AG04449 (cell line): ENCODE measurements at regions of chr10 and their contacts with region 1.

Region 1: DNA sequence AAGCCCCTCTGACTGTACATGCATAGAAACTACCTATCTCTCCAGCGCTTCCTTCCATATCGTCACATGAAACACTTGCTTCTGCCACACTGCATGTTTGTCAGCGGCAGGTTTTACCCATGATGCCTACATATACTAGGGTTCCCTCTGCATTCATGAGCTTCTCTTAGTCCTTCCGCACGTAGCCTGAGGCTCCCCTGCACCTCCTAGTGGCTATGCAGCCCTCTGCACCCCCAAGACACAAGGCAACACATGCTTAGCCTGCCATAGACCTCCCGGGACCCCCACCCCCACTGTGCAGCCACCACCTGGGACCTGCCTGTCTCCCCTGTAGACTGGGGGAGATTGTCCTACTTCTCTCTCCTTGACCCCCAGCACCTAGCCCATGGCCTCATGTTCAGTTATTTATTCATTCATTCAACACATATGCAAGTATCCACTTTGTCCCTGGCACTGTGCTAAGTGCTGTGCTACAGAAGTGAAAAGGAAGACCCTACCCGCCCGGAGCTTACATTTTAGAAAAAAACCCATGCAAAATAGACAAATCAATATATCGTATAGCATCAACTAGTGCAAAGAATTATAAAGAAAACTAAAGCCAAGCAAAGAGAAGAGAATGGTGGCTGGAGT is 23.5 kb downstream of the TMEM273 start:
- DNase-seq: no peak
- H3K4me3 ChIP-seq: no peak overlapping the region
- CTCF ChIP-seq: peak; percentile 76

Region 2: DNA sequence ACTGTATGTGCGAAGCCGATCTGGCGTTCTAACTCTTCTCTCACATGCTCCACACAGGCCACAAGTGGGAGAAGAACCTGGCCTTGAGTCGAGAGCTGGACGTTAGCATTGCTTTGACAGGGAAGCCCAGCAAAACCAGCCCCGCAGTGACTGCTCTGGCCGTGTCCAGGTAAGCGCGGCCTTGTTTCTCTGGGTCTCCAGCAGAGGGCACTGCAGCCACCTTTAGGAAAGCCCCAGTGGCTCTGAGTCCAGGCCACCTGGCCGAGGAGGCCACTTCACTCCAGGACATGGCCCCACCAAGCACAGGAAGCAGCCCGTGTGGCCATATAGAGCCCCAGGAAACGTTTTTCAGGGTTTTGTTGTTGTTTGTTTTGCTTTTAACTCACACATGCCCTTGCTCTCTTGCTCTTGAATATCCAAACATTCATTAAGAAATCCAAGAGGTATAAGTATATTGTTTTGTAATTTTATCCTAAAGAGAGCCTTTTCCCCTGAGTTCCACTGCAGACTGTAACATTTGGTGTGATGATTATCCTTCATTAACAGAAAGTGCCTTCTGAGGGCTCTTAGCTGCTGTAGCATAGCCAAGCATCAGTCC is 183.3 kb before region 1 on chr10:
- CTCF ChIA-PET with region 1: interaction called, 52 read pairs
- POLR2A ChIA-PET with region 1: no interaction called
- DNase-seq: no peak
- H3K4me3 ChIP-seq: no peak overlapping the region
- CTCF ChIP-seq: peak; percentile 90

Region 3: DNA sequence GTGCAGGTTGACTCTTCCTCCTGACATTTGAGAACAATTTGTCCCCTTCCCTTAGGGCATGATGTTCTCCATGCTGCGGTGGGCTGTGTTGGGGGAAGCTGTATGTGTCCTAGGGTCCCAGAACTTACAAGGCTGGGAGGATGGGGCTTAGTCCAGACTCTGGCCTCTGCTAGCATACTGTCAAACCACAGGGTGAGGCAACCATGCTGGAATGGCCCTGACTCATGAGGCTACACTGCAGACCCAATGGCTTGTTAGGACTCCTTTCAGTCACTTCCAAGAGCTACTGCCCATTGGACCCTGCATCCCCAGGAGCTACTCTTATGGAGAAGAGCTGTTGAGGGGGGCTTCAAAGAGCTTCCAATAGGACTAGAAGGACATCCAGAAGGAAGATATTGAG is 10.7 kb before region 1 on chr10:
- CTCF ChIA-PET with region 1: interaction called, 48 read pairs
- POLR2A ChIA-PET with region 1: no interaction called
- DNase-seq: no peak
- H3K4me3 ChIP-seq: no peak overlapping the region
- CTCF ChIP-seq: no peak

Region 4: GRCh38 chr10:49194212-49194920 is 29.7 kb after region 1 on chr10:
- CTCF ChIA-PET with region 1: no interaction called
- POLR2A ChIA-PET with region 1: no interaction called
- DNase-seq: no peak
- H3K4me3 ChIP-seq: no peak overlapping the region
- CTCF ChIP-seq: no peak

Region 5: DNA sequence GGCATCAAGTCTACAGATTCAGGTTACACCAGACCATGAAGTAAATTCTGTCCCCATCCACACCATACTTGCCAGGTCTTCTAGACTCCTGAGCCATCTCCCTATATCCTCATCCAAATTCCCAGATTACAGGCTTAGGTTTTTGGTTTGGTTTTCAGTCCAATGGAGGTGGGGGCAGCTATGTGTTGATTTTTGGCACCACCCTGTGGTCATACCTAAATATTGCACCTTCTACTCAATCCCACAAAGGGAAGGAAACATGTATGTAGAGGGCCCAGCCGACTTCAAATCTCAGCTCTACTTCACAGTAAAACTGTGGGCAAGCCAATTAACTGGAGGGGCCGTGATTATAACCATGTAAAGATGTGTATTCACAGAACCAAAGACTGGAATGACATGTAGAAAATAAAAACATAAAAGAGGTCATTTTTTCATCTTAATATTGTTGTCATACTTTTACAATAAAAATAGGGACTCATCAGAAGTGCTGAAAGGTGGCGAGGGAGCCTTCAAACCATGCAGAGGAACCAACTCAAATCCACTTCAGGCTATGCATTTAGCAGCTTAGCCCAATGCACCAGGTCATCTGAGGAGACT is 354.4 kb after region 1 on chr10:
- CTCF ChIA-PET with region 1: no interaction called
- POLR2A ChIA-PET with region 1: no interaction called
- DNase-seq: no peak
- H3K4me3 ChIP-seq: no peak overlapping the region
- CTCF ChIP-seq: peak; percentile 54